ENCODE measurements at regions of chr12 and their contacts with region 1.

Region 1: GRCh38 chr12:1795785-1796514 is 24.4 kb upstream of the LRTM2 start:
- DNase-seq: peak; percentile 72 to 96
- H3K4me3 ChIP-seq: peak overlapping the region; percentile 73 to 81
- H3K27ac ChIP-seq: peak overlapping the region; percentile 56 to 81
- H3K4me1 ChIP-seq: peaks cover 6 to 13% of the 10 kb centered on the region in 2 donors
- H3K27me3 ChIP-seq: no peaks in the 10 kb centered on the region
- CTCF ChIP-seq: peak; percentile 77 to 100 (median 90)

Region 2: GRCh38 chr12:1650260-1650977 is 145.5 kb before region 1 on chr12:
- intact Hi-C with region 1: loop called (anchors 1 kb)
- DNase-seq: no peak
- H3K4me3 ChIP-seq: no peak overlapping the region
- H3K27ac ChIP-seq: peak overlapping the region in 1 of 2 donors; percentile 47
- H3K4me1 ChIP-seq: peaks cover 0 to 12% of the 10 kb centered on the region in 2 donors
- H3K27me3 ChIP-seq: no peaks in the 10 kb centered on the region
- CTCF ChIP-seq: no peak

Region 3: DNA sequence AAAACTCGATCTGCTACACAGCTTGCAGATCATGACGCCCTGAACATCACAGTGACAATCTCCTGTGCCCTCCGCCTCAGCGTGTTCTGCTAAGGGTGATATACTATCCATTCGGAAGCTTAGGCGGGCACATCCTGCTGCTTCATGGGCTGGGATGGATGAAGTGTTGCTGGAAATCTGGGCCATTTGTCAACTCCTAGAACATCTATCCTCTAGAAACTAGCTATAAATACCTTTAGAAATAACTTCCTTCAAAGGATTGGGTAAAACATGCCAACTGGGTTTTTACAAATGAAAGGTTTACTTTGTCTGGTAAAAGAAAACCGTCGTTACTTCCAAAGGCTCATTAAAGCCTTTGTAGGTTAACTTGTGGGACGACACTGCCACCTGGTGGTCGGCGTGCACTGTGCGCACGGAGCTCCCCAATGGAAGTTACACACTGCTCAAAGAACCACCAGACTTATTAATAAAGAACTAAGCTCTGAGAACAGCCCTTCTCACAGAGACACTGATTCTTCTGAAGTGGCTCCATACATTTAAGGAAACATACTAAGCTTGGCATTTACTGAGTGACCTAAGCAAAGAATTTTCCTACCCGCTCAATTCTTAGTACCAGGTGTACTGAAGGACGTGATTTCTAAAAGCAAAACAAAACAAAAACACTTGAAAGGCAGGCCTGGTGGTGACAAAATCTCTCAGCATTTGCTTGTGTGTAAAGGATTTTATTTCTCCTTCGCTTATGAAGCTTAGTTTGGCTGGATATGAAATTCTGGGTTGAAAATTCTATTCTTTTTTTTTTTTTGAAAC is 144.1 kb after region 1 on chr12:
- intact Hi-C with region 1: loop called (anchors 1 kb)
- DNase-seq: peak in 1 of 2 donors; percentile 92
- H3K4me3 ChIP-seq: peak overlapping the region in 1 of 2 donors; percentile 7
- H3K27ac ChIP-seq: peak overlapping the region; percentile 2 to 39
- H3K4me1 ChIP-seq: peaks cover 6 to 19% of the 10 kb centered on the region in 2 donors
- H3K27me3 ChIP-seq: no peaks in the 10 kb centered on the region
- CTCF ChIP-seq: peak; percentile 90 to 93 (median 92)

Region 4: DNA sequence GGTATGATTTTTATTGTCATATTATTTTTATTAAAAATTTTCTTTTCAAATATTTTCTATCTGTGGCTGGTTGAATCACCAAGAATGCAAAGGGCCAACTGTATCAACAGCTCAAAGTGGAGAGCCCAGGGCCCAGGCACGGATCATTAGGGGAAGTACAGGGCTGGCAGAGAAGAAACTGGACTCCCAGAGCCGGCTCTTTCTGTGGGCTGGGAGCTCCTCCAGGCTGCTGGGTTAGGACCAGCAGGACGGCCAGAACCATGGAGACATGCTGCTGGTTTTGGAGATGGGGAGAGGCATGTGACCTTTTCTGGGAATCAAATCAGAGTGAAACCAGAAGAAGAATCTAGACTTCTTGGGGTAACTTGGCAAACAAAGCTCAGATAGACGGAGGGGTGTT is 477.3 kb after region 1 on chr12:
- intact Hi-C with region 1: loop called (anchors 2 kb)
- DNase-seq: peak in 1 of 2 donors; percentile 81
- H3K4me3 ChIP-seq: no peak overlapping the region
- H3K27ac ChIP-seq: peak overlapping the region; percentile 64 to 84
- H3K4me1 ChIP-seq: peaks cover 7 to 25% of the 10 kb centered on the region in 2 donors
- H3K27me3 ChIP-seq: no peaks in the 10 kb centered on the region
- CTCF ChIP-seq: peak; percentile 35 to 81 (median 69)

Region 5: GRCh38 chr12:2583091-2583497 is 787.1 kb after region 1 on chr12:
- intact Hi-C with region 1: loop called (anchors 2 kb)
- DNase-seq: peak in 1 of 2 donors; percentile 77
- H3K4me3 ChIP-seq: peak overlapping the region in 1 of 2 donors; percentile 44
- H3K27ac ChIP-seq: peak overlapping the region in 1 of 2 donors; percentile 38
- H3K4me1 ChIP-seq: peaks cover 0 to 6% of the 10 kb centered on the region in 2 donors
- H3K27me3 ChIP-seq: no peaks in the 10 kb centered on the region
- CTCF ChIP-seq: peak; percentile 86 to 94 (median 94)

Measured in ascending aorta (tissue), 2 donors.